Body of pancreas (tissue), 4 donors: ENCODE measurements at regions of chr11 and their contacts with region 1.

Region 1: GRCh38 chr11:93689240-93689639 is 27.8 kb downstream of the CEP295 start:
- DNase-seq: no peak
- ATAC-seq: no peak
- H3K4me3 ChIP-seq: no peak overlapping the region
- H3K27ac ChIP-seq: no peak overlapping the region
- H3K4me1 ChIP-seq: no peaks in the 10 kb centered on the region
- H3K27me3 ChIP-seq: no peaks in the 10 kb centered on the region
- CTCF ChIP-seq: no peak
- POLR2A ChIP-seq: no peak

Region 2: GRCh38 chr11:93512073-93512475 is 177.2 kb before region 1 on chr11:
- intact Hi-C with region 1: no loop called
- DNase-seq: no peak
- ATAC-seq: no peak
- H3K4me3 ChIP-seq: no peak overlapping the region
- H3K27ac ChIP-seq: no peak overlapping the region
- H3K4me1 ChIP-seq: no peaks in the 10 kb centered on the region
- H3K27me3 ChIP-seq: no peaks in the 10 kb centered on the region
- CTCF ChIP-seq: no peak
- POLR2A ChIP-seq: no peak

Region 3: DNA sequence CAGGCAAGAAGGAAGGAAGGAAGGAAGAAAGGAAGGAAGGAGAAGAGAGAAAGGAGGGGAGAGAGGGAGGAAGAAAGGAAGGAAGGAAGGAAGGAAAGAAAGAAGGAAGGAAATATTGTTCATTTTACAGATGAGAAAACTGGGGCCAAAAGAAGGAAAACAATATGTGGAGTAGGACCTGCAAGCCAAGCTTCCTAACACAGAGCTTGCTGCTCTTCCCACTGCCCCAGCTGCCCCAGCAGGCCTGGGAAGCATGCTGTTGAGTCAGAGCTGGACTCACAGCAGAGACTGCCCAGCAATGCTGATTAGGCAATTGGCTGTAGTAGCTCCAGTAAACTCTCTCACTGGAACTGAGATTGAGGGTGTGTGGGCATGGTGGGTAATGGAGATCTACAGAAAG is 103.5 kb before region 1 on chr11:
- intact Hi-C with region 1: no loop called
- DNase-seq: peak in 1 of 4 donors; percentile 16
- ATAC-seq: no peak
- H3K4me3 ChIP-seq: no peak overlapping the region
- H3K27ac ChIP-seq: no peak overlapping the region
- H3K4me1 ChIP-seq: peaks cover 13% of the 10 kb centered on the region
- H3K27me3 ChIP-seq: no peaks in the 10 kb centered on the region
- CTCF ChIP-seq: no peak
- POLR2A ChIP-seq: no peak

Region 4: DNA sequence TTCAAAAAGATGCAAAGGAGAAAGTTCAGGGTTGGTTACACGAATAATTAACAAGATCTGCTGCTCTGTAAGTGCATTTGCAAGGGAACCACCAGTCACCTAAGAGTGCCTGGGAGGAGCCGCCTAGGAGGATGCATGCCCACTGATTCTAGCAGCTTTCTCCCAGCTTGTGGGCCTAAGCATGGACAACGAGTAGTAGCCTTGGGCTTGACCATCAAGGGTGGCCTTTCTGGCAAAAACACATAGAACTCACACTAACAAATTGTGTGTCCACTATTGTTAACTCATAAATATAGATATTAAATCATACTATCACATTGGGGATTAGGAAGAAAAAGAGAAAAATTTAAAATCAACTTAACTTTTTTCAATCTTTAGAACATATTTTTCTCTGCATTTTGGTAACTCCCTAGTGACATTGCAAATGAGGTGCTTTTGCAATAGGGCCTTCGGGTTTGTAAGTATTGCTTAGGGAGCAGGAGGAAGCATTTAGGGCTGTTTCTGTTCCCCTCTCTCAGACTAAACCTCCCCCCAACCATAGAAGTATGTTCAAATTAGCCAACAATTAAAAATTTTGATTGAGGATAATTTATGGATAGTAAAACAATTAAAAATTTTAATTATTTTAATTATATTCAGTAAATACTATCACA is 85.1 kb before region 1 on chr11:
- intact Hi-C with region 1: no loop called
- DNase-seq: no peak
- ATAC-seq: no peak
- H3K4me3 ChIP-seq: no peak overlapping the region
- H3K27ac ChIP-seq: no peak overlapping the region
- H3K4me1 ChIP-seq: no peaks in the 10 kb centered on the region
- H3K27me3 ChIP-seq: no peaks in the 10 kb centered on the region
- CTCF ChIP-seq: no peak
- POLR2A ChIP-seq: no peak

Region 5: DNA sequence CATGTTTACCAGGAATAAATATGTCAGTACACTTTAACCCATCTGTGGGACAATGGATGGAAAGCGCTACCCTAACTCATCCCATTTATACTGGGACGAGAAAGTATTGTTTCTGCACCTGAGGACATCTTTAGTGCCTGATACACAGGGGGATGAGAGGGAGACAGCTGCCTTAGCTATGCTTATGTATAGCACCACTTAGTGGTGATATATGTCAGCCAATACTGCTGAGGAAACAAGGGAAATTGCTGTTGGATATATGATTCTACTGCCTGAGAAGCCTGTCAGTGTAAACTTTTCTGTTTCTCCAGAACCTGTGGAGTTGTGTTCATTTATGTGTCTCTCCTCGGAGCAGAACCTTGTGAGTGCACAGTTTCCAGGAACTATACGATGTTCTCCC is 41.1 kb before region 1 on chr11:
- intact Hi-C with region 1: no loop called
- DNase-seq: no peak
- ATAC-seq: no peak
- H3K4me3 ChIP-seq: no peak overlapping the region
- H3K27ac ChIP-seq: no peak overlapping the region
- H3K4me1 ChIP-seq: no peaks in the 10 kb centered on the region
- H3K27me3 ChIP-seq: no peaks in the 10 kb centered on the region
- CTCF ChIP-seq: peak in 4 of 7 experiments; percentile 12 to 30 (median 26)
- POLR2A ChIP-seq: no peak

Region 6: GRCh38 chr11:93737904-93738612 is 48.8 kb after region 1 on chr11:
- intact Hi-C with region 1: loop called (anchors 10 kb)
- DNase-seq: no peak
- ATAC-seq: no peak
- H3K4me3 ChIP-seq: no peak overlapping the region
- H3K27ac ChIP-seq: no peak overlapping the region
- H3K4me1 ChIP-seq: peaks cover 68% of the 10 kb centered on the region
- H3K27me3 ChIP-seq: no peaks in the 10 kb centered on the region
- CTCF ChIP-seq: no peak
- POLR2A ChIP-seq: no peak